Activated CD8-positive, alpha-beta memory T cell treated with anti-CD3 and anti-CD28 coated beads, Interleukin-2, amount 10 ng/mL, durations not matched to agents 7 days and 5 days (primary cell): ENCODE measurements at regions of chr12 and their contacts with region 1.

Region 1: DNA sequence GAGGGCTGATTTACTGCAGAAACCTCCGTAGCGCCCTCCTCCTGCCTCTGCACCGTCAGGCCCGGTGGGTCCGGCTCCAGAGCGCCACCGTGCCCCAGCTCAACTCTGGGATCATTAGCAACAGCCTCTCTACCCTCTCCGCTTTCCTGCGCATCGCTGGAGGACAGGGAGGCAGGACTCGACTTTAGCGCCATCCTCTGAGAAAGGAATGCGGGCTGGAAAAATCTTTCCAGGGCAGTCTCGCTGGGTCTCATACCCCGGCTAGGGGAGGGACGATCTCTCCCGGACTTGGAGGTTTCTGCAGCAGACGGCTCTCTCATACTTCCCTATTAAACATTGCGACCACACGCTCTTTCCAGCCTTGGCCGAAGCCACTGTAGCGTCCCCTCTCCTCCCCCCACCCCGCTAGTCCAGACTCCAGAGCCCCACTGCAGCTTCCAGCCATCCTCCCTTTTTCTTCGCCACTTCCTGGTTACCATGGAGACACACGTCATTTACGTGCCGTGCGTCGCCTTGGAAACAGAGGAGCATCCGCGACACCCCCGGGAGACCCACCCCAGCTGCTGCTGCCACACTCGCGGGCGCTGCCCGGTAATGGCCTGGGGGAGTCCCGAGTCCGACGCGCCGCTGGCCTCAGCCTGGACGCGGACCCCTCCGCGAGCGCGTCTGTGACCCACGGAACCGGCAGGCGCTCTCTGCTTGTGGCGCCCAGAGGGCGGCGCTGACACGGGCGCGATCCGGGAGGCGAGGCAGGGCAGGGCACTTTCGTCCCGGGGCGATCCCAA is at the start of gene CCDC184:
- DNase-seq: peak; percentile 84
- ATAC-seq: peak; percentile 83
- H3K4me3 Mint-ChIP-seq: peak within 1 kb of the TSS; percentile 87
- H3K27ac Mint-ChIP-seq: peak within 1 kb of the TSS; percentile 72
- H3K4me1 Mint-ChIP-seq: peaks cover 22% of the 10 kb centered on the region
- H3K27me3 Mint-ChIP-seq: peaks cover 46% of the 10 kb centered on the region
- total RNA-seq, gene CCDC184: 0.32 to 0.63 TPM

Region 2: DNA sequence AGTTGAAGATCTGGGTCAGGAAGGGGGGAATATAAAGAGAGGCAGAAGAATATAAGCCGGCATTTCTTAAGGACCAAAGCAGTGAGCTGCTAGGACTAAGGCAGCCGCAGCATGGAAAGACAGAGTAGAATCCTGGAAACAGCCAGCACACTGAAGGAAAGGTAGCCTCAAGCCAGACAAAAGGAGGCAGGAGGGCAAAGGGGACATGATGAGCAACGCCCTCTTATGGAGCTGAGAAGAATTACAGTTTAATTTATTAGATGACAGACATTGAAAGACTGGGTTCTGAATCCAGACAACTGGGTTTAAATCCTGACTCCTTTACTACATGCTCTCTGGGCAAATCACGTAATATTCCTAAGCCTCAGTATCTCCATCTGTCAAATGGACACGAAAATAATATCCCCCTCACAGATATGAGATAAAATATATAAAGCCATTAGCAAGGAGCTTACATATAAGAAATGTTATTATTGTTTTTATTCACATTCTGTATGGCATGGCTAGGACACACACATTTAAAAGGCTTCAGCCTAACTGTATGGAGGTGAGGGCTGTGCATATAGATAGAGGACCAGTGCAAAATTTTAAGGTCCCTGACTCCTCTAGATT is 1111.9 kb before region 1 on chr12:
- CTCF ChIA-PET with region 1: no interaction called
- DNase-seq: no peak
- ATAC-seq: peak; percentile 33
- H3K4me3 Mint-ChIP-seq: no peak overlapping the region
- H3K27ac Mint-ChIP-seq: no peak overlapping the region
- H3K4me1 Mint-ChIP-seq: peaks cover 11% of the 10 kb centered on the region
- H3K27me3 Mint-ChIP-seq: no peaks in the 10 kb centered on the region

Region 3: GRCh38 chr12:48105862-48106680 is 77.2 kb before region 1 on chr12 and contains the start of gene SENP1:
- CTCF ChIA-PET with region 1: interaction called, 13 read pairs
- DNase-seq: peak; percentile 93
- ATAC-seq: peak; percentile 84
- H3K4me3 Mint-ChIP-seq: peak within 1 kb of the TSS; percentile 89
- H3K27ac Mint-ChIP-seq: peak within 1 kb of the TSS; percentile 86
- H3K4me1 Mint-ChIP-seq: peaks cover 57% of the 10 kb centered on the region
- H3K27me3 Mint-ChIP-seq: no peaks in the 10 kb centered on the region
- total RNA-seq, gene SENP1: 41.3 to 54.8 TPM

Region 4: GRCh38 chr12:48197971-48198671 is 14.8 kb after region 1 on chr12:
- CTCF ChIA-PET with region 1: interaction called, 60 read pairs
- DNase-seq: peak; percentile 97
- ATAC-seq: peak; percentile 99
- H3K4me3 Mint-ChIP-seq: peak overlapping the region; percentile 84
- H3K27ac Mint-ChIP-seq: peak overlapping the region; percentile 96
- H3K4me1 Mint-ChIP-seq: peaks cover 35% of the 10 kb centered on the region
- H3K27me3 Mint-ChIP-seq: peaks cover 22% of the 10 kb centered on the region

Region 5: GRCh38 chr12:48216785-48217184 is 33.5 kb after region 1 on chr12:
- CTCF ChIA-PET with region 1: no interaction called
- DNase-seq: no peak
- ATAC-seq: no peak
- H3K4me3 Mint-ChIP-seq: no peak overlapping the region
- H3K27ac Mint-ChIP-seq: no peak overlapping the region
- H3K4me1 Mint-ChIP-seq: no peaks in the 10 kb centered on the region
- H3K27me3 Mint-ChIP-seq: peaks cover 35% of the 10 kb centered on the region